ENCODE measurements at regions of chr20 and their contacts with region 1.

Region 1: GRCh38 chr20:34312544-34313217 is 9.5 kb upstream of the AHCY start:
- DNase-seq: peak; percentile 90
- H3K4me3 Mint-ChIP-seq: no peak overlapping the region
- H3K27ac Mint-ChIP-seq: no peak overlapping the region
- H3K4me1 Mint-ChIP-seq: peaks cover 20% of the 10 kb centered on the region
- H3K27me3 Mint-ChIP-seq: peaks cover 22% of the 10 kb centered on the region

Region 2: DNA sequence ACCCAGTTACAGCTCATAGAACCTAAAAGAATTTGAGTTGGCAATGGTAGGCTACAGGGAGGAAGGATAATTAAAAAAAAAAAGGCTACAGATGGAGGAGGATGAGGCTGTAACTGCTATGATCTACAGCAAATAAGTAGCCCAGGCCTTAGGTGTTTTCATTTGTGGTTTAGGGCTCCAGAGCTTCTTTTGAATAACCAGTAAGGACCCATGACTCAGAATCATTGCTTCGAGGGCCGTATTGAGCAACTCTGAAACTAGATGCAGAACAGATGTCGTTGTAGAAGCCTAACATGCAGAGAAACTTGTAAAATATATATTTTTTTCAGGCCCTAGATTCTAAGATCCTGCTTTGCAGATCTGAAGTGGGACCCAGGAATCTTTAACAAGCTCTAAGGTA is 90.5 kb before region 1 on chr20:
- CTCF ChIA-PET with region 1: no interaction called
- POLR2A ChIA-PET with region 1: no interaction called
- DNase-seq: no peak
- H3K4me3 Mint-ChIP-seq: no peak overlapping the region
- H3K27ac Mint-ChIP-seq: no peak overlapping the region
- H3K4me1 Mint-ChIP-seq: peaks cover 6% of the 10 kb centered on the region
- H3K27me3 Mint-ChIP-seq: peaks cover 20% of the 10 kb centered on the region

Region 3: GRCh38 chr20:34295284-34295683 is 17.4 kb before region 1 on chr20:
- CTCF ChIA-PET with region 1: interaction called, 40 read pairs
- POLR2A ChIA-PET with region 1: no interaction called
- DNase-seq: no peak
- H3K4me3 Mint-ChIP-seq: no peak overlapping the region
- H3K27ac Mint-ChIP-seq: no peak overlapping the region
- H3K4me1 Mint-ChIP-seq: peaks cover 3% of the 10 kb centered on the region
- H3K27me3 Mint-ChIP-seq: no peaks in the 10 kb centered on the region

Region 4: GRCh38 chr20:34403908-34404307 is 91.2 kb after region 1 on chr20:
- CTCF ChIA-PET with region 1: interaction called, 11 read pairs
- POLR2A ChIA-PET with region 1: no interaction called
- DNase-seq: no peak
- H3K4me3 Mint-ChIP-seq: no peak overlapping the region
- H3K27ac Mint-ChIP-seq: no peak overlapping the region
- H3K4me1 Mint-ChIP-seq: peaks cover 38% of the 10 kb centered on the region
- H3K27me3 Mint-ChIP-seq: no peaks in the 10 kb centered on the region

Region 5: DNA sequence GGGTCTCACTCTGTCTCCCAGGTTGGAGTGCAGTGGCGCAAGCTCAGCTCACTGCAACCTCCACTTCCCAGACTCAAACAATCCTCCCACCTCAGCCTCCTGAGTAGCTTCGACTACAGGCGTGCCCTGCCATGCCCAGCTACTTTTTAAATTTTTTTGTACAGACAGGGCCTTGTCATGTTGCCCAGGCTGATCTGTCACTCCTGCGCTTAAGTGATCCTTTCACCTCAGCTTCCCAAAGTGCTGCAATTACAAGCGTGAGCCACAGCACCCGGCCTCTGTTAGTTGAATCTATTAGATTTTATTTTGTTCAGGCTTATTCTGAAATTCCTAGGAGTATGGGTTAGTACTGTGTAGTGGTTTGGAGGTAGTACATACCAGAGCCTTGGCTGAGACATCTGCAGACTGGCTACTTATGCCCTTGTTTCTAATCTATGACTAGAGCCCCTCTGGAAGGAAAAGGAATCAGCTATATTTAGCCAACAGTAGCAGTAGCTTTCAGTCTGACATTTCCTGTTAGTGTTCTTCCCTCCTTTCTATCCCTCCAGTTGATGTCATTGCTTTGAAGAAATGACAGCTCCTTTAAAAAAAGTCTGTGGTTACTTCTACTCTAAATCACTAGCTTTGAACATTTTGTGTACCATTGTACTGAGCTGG is 124.8 kb after region 1 on chr20:
- CTCF ChIA-PET with region 1: interaction called, 11 read pairs
- POLR2A ChIA-PET with region 1: no interaction called
- DNase-seq: no peak
- H3K4me3 Mint-ChIP-seq: no peak overlapping the region
- H3K27ac Mint-ChIP-seq: no peak overlapping the region
- H3K4me1 Mint-ChIP-seq: peaks cover 15% of the 10 kb centered on the region
- H3K27me3 Mint-ChIP-seq: no peaks in the 10 kb centered on the region

Region 6: GRCh38 chr20:34516247-34517113 is 203.8 kb after region 1 on chr20 and contains the start of gene DYNLRB1:
- CTCF ChIA-PET with region 1: interaction called, 109 read pairs
- POLR2A ChIA-PET with region 1: interaction called, 13 read pairs
- DNase-seq: peak; percentile 95
- H3K4me3 Mint-ChIP-seq: peak within 1 kb of the TSS; percentile 97
- H3K27ac Mint-ChIP-seq: peak within 1 kb of the TSS; percentile 95
- H3K4me1 Mint-ChIP-seq: peaks cover 37% of the 10 kb centered on the region
- H3K27me3 Mint-ChIP-seq: no peaks in the 10 kb centered on the region
- total RNA-seq, gene DYNLRB1: 107 to 109 TPM

Region 7: GRCh38 chr20:34538671-34539123 is 226.0 kb after region 1 on chr20:
- CTCF ChIA-PET with region 1: interaction called, 28 read pairs
- POLR2A ChIA-PET with region 1: interaction called, 3 read pairs
- DNase-seq: peak; percentile 61
- H3K4me3 Mint-ChIP-seq: no peak overlapping the region
- H3K27ac Mint-ChIP-seq: no peak overlapping the region
- H3K4me1 Mint-ChIP-seq: peaks cover 19% of the 10 kb centered on the region
- H3K27me3 Mint-ChIP-seq: no peaks in the 10 kb centered on the region

Region 8: DNA sequence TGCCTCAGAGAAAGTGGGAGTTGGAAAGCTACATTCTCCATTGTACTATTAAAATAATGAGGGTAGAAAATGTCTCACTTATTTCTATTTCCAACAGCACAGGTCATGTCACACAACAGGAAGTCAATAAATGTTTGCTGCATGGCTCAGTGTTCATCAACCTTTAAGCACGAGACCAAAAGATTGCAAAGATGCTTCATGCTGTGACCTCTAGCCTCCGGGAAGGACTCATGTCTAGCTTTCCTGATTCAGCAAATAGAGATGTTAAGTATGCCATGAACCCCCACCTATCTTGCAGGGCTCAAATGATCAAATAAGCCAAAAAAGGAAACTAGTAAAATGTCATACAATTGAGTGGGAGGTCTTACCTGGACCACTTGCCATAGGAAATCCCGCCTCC is 455.4 kb after region 1 on chr20:
- CTCF ChIA-PET with region 1: interaction called, 48 read pairs
- POLR2A ChIA-PET with region 1: no interaction called
- DNase-seq: no peak
- H3K4me3 Mint-ChIP-seq: no peak overlapping the region
- H3K27ac Mint-ChIP-seq: no peak overlapping the region
- H3K4me1 Mint-ChIP-seq: peaks cover 2% of the 10 kb centered on the region
- H3K27me3 Mint-ChIP-seq: no peaks in the 10 kb centered on the region

Measured in activated CD4-positive, alpha-beta memory T cell treated with anti-CD3 and anti-CD28 coated beads, Interleukin-2, amount 10 ng/mL, durations not matched to agents 7 days and 5 days (primary cell).